ENCODE measurements at regions of chr16 and their contacts with region 1.

Region 1: DNA sequence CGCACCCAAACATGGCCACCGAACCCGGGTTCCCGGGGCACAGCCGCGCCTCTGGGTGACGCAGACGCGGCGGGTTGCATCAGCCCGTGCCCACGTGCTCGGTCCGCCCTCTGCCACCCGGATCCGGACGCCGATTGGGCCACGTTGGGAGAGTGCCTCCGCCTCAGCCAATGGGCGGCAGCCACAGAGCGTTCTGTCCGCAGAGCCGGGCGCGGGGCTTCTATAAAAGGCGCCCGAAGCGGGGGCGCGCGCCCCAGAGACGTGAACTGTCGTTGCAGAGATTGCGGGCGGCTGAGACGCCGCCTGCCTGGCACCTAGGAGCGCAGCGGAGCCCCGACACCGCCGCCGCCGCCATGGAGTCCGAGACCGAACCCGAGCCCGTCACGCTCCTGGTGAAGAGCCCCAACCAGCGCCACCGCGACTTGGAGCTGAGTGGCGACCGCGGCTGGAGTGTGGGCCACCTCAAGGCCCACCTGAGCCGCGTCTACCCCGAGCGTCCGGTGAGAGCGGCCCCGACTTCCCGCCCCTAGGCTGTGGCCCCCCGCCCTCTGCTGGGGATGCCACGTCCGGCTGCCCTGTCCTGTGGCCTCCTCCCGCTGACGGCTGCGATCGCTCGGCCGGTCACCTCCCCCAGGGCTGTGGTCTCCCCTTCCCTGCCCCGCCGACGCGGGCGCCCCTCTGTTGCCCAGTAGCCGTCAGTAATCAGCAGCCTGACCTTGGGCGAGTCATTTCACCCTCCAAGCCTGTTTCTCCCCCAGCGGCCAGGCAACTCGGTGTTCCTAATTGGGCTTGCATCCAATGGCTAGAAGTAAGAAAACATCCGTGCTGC is at the start of gene HERPUD1:
- DNase-seq: peak; percentile 99
- H3K4me3 ChIP-seq: peak within 1 kb of the TSS; percentile 86 to 100 (median 100)
- H3K27ac ChIP-seq: peak within 1 kb of the TSS; percentile 98 to 100 (median 100)
- H3K4me1 ChIP-seq: peaks cover 0 to 42% (median 38%) of the 10 kb centered on the region in 4 donors
- H3K27me3 ChIP-seq: no peaks in the 10 kb centered on the region
- CTCF ChIP-seq: peak in 1 of 4 experiments; percentile 19
- EP300 ChIP-seq: no peak
- POLR2A ChIP-seq: peak; percentile 80 to 86
- total RNA-seq, gene HERPUD1: 63.1 to 93.1 (median 73.1) TPM

Region 2: GRCh38 chr16:56608043-56608875 is 323.8 kb before region 1 on chr16 and contains the start of gene MT2A:
- intact Hi-C with region 1: loop called (anchors 10 kb)
- DNase-seq: peak; percentile 98
- H3K4me3 ChIP-seq: peak within 1 kb of the TSS; percentile 47 to 62 (median 54)
- H3K27ac ChIP-seq: peak within 1 kb of the TSS; percentile 86 to 93 (median 89)
- H3K4me1 ChIP-seq: peaks cover 0 to 44% (median 44%) of the 10 kb centered on the region in 4 donors
- H3K27me3 ChIP-seq: no peaks in the 10 kb centered on the region
- CTCF ChIP-seq: no peak
- EP300 ChIP-seq: peak; percentile 5 to 87 (median 40)
- POLR2A ChIP-seq: peak; percentile 67 to 88
- total RNA-seq, gene MT2A: 37.5 to 161 (median 96.0) TPM

Region 3: DNA sequence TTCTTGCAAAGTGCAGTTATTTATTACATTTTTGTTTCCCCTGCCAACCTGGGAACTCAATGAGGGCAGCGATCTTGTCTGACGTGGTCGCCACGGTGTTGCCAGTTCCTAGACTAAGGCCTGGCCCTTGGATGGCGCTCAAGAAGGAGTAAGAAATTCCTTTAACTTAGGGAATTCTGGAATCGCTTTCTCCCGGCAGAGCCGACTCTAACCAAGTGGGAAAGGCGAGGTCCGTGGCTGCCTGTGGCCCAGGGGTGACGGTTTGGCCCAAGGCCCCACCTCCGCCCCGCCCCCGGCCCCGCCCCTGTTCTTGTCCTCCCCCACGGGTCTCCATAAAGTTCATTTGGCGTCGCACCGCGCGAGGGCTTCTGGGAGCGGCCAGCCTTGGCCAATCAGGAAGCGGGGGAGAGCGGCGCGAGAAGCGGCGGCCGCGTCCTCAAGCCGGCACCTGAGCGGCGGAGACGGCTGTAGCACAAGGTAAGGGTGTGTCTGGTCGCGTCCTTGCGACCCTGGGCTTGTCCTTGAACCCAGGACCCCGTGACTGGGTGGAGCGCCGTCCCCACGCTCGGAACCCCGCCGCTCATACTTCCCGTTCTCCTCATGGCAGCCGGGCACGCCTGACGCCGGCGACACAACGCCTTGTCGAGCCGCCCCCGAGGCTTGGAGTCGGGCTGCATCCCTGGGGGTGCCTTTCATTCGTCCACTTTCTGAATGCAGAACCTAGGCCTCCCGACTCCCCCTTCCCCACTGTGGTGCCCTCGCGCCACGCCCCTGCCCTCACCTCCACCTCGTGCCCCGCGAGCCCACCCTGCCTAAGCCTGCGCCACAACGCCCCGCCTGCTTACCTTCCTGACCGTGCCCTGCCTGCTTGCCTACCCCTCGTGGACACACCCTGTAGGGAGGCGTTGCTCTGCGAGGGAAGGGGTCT is 202.1 kb before region 1 on chr16 and contains the start of gene NUP93:
- intact Hi-C with region 1: loop called (anchors 2 kb)
- DNase-seq: peak; percentile 96
- H3K4me3 ChIP-seq: peak within 1 kb of the TSS; percentile 53 to 97 (median 86)
- H3K27ac ChIP-seq: peak within 1 kb of the TSS; percentile 81 to 84 (median 83)
- H3K4me1 ChIP-seq: peaks cover 0 to 27% (median 18%) of the 10 kb centered on the region in 4 donors
- H3K27me3 ChIP-seq: no peaks in the 10 kb centered on the region
- CTCF ChIP-seq: no peak
- EP300 ChIP-seq: no peak
- POLR2A ChIP-seq: peak; percentile 12 to 28
- total RNA-seq, gene NUP93: 20.2 to 35.5 (median 22.2) TPM

Region 4: DNA sequence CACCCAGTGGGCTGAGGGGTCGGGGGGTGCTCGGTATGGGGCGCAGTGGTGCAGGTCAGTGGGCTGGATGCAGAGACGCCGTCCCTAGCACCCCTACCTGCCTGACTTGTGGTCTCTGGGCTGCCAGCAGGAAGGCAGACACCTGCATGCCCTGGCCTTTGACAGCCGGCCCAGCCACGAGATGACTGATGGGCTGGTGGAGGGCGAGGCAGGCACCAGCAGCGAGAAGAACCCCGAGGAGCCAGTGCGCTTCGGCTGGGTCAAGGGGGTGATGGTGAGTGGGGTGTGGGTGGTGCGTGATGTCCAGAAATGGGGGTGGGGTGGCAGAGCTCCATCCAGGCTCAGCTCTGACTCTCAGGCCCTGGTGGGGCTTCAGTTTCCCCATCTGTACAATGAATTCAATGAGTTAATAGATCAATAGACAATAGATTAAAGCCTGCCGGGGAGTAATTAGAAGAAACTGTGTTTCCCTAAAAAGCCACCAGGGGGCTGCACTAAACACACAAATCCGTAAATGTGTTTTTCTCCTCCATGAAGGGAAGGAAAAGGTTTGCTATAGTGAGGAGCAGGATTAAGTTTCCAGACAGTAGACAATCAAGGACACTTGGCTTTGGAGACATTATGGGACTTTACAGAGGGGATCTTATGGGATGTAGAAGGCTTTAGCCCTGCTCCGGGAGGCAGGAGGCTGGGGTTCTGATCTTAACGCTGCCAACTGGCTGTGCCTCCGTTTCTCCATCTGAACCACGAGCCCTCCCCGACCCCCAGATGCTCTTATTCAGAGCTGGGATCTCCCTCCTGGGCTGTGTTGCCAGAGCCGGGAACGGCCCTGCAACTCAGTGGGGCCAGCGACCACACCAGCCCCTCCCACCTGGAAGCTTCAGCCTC is 64.9 kb before region 1 on chr16:
- intact Hi-C with region 1: loop called (anchors 1 kb)
- DNase-seq: no peak
- H3K4me3 ChIP-seq: no peak overlapping the region
- H3K27ac ChIP-seq: no peak overlapping the region
- H3K4me1 ChIP-seq: peaks cover 0 to 9% (median 4%) of the 10 kb centered on the region in 4 donors
- H3K27me3 ChIP-seq: no peaks in the 10 kb centered on the region
- CTCF ChIP-seq: peak; percentile 42 to 74 (median 66)
- EP300 ChIP-seq: no peak
- POLR2A ChIP-seq: no peak

Region 5: GRCh38 chr16:56988948-56989945 is 57.1 kb after region 1 on chr16 and contains the start of gene NLRC5:
- intact Hi-C with region 1: loop called (anchors 1 kb)
- DNase-seq: peak; percentile 91
- H3K4me3 ChIP-seq: peak within 1 kb of the TSS; percentile 69 to 88 (median 80)
- H3K27ac ChIP-seq: peak within 1 kb of the TSS; percentile 79 to 90 (median 87)
- H3K4me1 ChIP-seq: peaks cover 0 to 60% (median 44%) of the 10 kb centered on the region in 4 donors
- H3K27me3 ChIP-seq: no peaks in the 10 kb centered on the region
- CTCF ChIP-seq: no peak
- EP300 ChIP-seq: peak in 2 of 4 donors; percentile 9 to 31
- POLR2A ChIP-seq: peak; percentile 64 to 93
- total RNA-seq, gene NLRC5: 9.5 to 37.7 (median 16.0) TPM

Region 6: GRCh38 chr16:57185944-57186871 is 254.1 kb after region 1 on chr16 and contains the starts of genes PSME3IP1 and RSPRY1:
- intact Hi-C with region 1: loop called (anchors 5 kb)
- DNase-seq: peak; percentile 99
- H3K4me3 ChIP-seq: peak within 1 kb of the TSS; percentile 88 to 99 (median 96)
- H3K27ac ChIP-seq: peak within 1 kb of the TSS; percentile 97 to 99 (median 98)
- H3K4me1 ChIP-seq: peaks cover 0 to 57% (median 42%) of the 10 kb centered on the region in 4 donors
- H3K27me3 ChIP-seq: no peaks in the 10 kb centered on the region
- CTCF ChIP-seq: no peak
- EP300 ChIP-seq: no peak
- POLR2A ChIP-seq: peak; percentile 81 to 83
- total RNA-seq, gene PSME3IP1: 60.1 to 81.3 (median 76.9) TPM
- total RNA-seq, gene RSPRY1: 30.6 to 42.7 (median 34.1) TPM

Region 7: DNA sequence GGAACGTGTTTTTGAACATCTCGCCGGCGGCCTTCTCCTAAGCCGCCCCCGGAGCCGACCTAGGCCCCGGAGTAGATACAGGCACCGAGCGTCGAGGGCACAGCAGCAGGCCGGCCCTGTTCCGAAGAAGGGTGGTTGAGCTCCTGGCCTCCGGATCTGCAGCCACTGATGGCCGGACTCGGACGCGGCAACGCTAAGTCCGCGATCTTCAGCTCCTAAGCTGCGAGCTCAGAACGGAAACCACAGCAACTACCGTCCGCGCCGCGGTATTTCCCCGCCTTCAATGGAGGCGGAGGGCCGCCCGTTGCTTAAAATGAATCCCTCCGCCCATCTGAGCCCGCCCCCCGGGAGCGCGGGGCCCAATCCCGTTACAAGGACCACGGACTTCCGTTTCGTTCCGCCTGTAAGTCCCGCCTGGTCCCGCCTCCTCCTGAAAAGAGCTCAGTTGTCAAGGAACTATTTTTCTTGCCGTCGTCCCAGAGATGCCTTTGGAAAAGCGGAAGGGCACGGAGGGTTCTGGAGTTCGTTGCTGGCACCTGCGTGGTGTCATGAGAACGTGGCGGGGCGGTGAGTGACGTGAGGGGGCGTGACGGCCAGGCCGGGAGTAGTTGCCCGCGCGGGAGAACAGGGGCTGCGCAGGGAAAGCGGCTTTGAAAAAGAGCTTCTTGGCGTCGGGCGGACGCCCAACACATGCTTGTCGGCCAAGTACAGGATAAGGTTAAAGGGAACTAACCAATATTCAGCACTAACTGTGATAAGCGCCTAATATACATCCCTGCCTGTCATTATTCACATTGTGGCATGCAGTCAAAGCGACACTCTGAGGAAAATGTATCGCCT is 1197.2 kb after region 1 on chr16 and contains the start of gene CFAP20:
- intact Hi-C with region 1: loop called (anchors 10 kb)
- DNase-seq: peak; percentile 99
- H3K4me3 ChIP-seq: peak within 1 kb of the TSS; percentile 73 to 92 (median 84)
- H3K27ac ChIP-seq: peak within 1 kb of the TSS; percentile 89 to 95 (median 92)
- H3K4me1 ChIP-seq: peaks cover 0 to 41% (median 39%) of the 10 kb centered on the region in 4 donors
- H3K27me3 ChIP-seq: no peaks in the 10 kb centered on the region
- CTCF ChIP-seq: no peak
- EP300 ChIP-seq: peak in 2 of 4 donors; percentile 52 to 73
- POLR2A ChIP-seq: peak; percentile 86 to 88
- total RNA-seq, gene CFAP20: 11.9 to 42.5 (median 26.6) TPM